ENCODE measurements at regions of chr12 and their contacts with region 1.

Region 1: DNA sequence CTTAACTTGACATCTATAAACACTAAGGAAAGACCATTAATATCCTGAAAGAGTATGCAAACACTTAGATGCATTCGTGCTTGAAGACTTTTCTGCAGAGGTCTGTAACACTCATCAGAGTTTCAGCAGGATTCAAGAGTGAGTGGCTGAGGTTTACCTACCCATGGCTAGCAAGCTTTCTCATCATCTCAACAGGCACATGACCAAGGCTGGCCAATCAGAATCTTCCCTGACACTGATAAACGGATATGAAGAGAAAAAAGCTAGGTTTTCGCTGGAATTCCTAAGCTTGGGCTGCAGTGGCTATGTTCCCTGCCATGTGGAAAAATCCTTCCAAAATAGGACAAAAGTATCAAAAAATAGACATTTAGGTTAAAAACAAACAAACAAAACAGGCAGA is 162.1 kb upstream of the USP15 start:
- DNase-seq: no peak
- H3K4me3 Mint-ChIP-seq: no peak overlapping the region
- H3K27ac Mint-ChIP-seq: no peak overlapping the region
- H3K4me1 Mint-ChIP-seq: no peaks in the 10 kb centered on the region
- H3K27me3 Mint-ChIP-seq: no peaks in the 10 kb centered on the region

Region 2: GRCh38 chr12:60123408-60124000 is 1974.6 kb before region 1 on chr12:
- CTCF ChIA-PET with region 1: no interaction called
- POLR2A ChIA-PET with region 1: no interaction called
- intact Hi-C with region 1: loop called (anchors 5 kb)
- DNase-seq: no peak
- H3K4me3 Mint-ChIP-seq: no peak overlapping the region
- H3K27ac Mint-ChIP-seq: no peak overlapping the region
- H3K4me1 Mint-ChIP-seq: no peaks in the 10 kb centered on the region
- H3K27me3 Mint-ChIP-seq: no peaks in the 10 kb centered on the region

Region 3: GRCh38 chr12:62319058-62319457 is 220.9 kb after region 1 on chr12:
- CTCF ChIA-PET with region 1: no interaction called
- POLR2A ChIA-PET with region 1: no interaction called
- intact Hi-C with region 1: no loop called
- DNase-seq: no peak
- H3K4me3 Mint-ChIP-seq: no peak overlapping the region
- H3K27ac Mint-ChIP-seq: no peak overlapping the region
- H3K4me1 Mint-ChIP-seq: peaks cover 17% of the 10 kb centered on the region
- H3K27me3 Mint-ChIP-seq: no peaks in the 10 kb centered on the region